Endothelial cell of umbilical vein (primary cell): ENCODE measurements at regions of chr17 and their contacts with region 1.

Region 1: DNA sequence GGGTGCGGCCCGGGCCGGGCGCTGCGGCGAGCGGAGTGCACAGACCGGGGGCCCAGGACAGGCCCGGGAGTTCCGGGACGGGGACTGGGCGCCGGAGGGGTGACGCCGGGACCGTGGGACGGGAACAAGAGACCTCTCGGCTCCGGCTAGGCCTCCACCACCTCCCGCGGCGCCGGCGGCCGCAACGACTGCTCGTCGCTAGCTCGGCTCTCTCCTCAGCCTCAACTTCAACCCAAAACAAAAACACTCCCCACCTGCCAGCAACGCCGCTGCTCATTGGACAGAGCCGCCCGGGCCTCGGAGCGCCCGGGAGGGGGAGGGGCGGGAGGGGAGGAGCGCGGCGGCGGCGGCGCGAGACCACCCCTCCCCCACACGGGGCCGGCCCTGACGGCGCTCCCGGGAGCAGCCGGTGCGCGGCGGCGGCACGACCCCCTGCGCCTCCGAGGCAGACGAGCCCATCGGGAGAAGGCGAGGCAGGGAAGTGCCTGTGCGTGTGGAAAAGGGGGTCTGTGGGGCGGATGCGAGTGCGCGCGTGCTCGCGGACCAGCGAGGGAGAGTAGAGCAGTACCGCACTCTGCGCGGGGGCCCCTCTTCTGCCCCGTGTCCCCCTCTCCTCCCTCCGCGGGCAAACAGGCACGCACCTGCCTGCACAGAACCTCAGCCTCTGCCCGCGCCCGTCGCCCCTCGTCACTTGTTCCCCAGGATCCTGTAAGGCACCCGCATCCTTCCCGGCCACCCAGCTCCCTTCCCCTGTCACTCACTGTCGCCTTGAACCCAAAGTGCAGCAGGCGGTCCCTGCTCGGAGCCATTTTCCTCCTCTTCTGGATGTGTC is at the start of gene FBXL20:
- DNase-seq: peak; percentile 87
- H3K4me3 ChIP-seq: peak within 1 kb of the TSS; percentile 74 to 90 (median 81)
- H3K27ac ChIP-seq: peak within 1 kb of the TSS; percentile 35
- H3K4me1 ChIP-seq: peaks cover 11% of the 10 kb centered on the region
- H3K27me3 ChIP-seq: no peaks in the 10 kb centered on the region
- CTCF ChIP-seq: no peak
- POLR2A ChIP-seq: peak; percentile 50
- total RNA-seq, gene FBXL20: 14.8 and 18.0 TPM in 2 replicates

Region 2: DNA sequence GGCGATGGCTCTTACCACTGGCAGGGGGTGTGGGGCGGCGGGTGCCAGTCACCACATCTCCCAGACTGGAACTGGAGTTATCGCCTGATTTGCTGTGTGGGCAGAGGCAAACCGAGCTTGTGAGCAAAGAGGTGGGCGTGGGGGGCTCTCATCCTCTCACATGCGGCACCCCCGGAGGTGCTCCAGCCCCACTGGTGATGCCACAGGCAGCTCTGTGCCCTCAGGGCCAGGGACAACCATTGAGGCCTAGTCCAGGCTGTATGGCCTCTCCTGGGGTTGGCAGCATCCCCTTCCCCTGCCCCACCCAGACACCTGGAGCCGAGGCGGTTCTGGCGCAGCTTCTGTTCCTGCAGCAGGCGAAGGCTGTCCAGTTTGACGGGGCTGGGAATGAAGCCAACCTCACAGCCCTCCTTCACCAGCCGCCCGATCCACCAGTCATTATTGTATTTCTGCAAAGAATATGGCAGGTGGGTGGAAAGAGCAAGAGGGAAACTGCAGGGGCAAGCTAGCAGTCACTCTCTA is 215.1 kb before region 1 on chr17:
- CTCF ChIA-PET with region 1: no interaction called
- POLR2A ChIA-PET with region 1: no interaction called
- dilution Hi-C with region 1: no loop called
- intact Hi-C with region 1: no loop called
- DNase-seq: no peak
- H3K4me3 ChIP-seq: no peak overlapping the region
- H3K27ac ChIP-seq: no peak overlapping the region
- H3K4me1 ChIP-seq: no peaks in the 10 kb centered on the region
- H3K27me3 ChIP-seq: no peaks in the 10 kb centered on the region
- CTCF ChIP-seq: no peak
- POLR2A ChIP-seq: no peak

Region 3: DNA sequence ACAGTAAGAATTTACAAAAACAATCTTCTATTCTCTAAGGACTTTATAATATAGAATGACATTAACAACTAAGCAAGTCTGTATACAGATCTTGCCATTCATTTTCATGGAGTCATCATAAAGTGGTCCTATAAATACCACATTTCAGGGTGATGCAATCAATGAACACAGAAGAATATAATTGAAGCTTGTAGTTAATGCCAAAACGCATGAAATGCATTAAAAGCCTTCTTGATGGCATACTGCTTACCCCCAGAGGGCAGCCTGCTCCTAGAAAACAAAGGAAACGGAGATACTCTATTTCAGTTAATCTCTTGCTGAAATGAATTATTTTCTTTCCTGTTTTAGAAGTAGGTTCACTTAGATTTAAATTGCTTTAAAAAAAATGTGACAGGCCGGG is 130.7 kb before region 1 on chr17:
- CTCF ChIA-PET with region 1: interaction called, 12 read pairs
- POLR2A ChIA-PET with region 1: no interaction called
- dilution Hi-C with region 1: no loop called
- intact Hi-C with region 1: loop called (anchors 2 kb)
- DNase-seq: peak; percentile 39
- H3K4me3 ChIP-seq: no peak overlapping the region
- H3K27ac ChIP-seq: no peak overlapping the region
- H3K4me1 ChIP-seq: no peaks in the 10 kb centered on the region
- H3K27me3 ChIP-seq: no peaks in the 10 kb centered on the region
- CTCF ChIP-seq: peak; percentile 11 to 27
- POLR2A ChIP-seq: no peak